Activated T-helper 1 cell treated with anti-CD3 and anti-CD28 coated beads, Interleukin-12 subunit alpha, Interleukin-12 subunit beta, Interleukin-2, Interleukin-4 antibody, amounts not matched to agents 30 ng/mL and 10 ng/mL and 1 ng/mL, durations not matched to agents 14 hours and 24 hours and 36 hours (primary cell): ENCODE measurements at regions of chr12 and their contacts with region 1.

Region 1: GRCh38 chr12:76031537-76032073 is at the start of gene PHLDA1:
- DNase-seq: peak; percentile 95
- H3K4me3 Mint-ChIP-seq: peak within 1 kb of the TSS; percentile 99
- H3K27ac Mint-ChIP-seq: peak within 1 kb of the TSS; percentile 99
- H3K4me1 Mint-ChIP-seq: peaks cover 34% of the 10 kb centered on the region
- H3K27me3 Mint-ChIP-seq: peaks cover 3% of the 10 kb centered on the region
- total RNA-seq, gene PHLDA1: 88.9 and 91.5 TPM in 2 replicates

Region 2: GRCh38 chr12:74537707-74538385 is 1493.8 kb before region 1 on chr12 and contains the start of gene ATXN7L3B:
- intact Hi-C with region 1: loop called (anchors 5 kb)
- DNase-seq: peak; percentile 93
- H3K4me3 Mint-ChIP-seq: peak within 1 kb of the TSS; percentile 92
- H3K27ac Mint-ChIP-seq: peak within 1 kb of the TSS; percentile 97
- H3K4me1 Mint-ChIP-seq: peaks cover 55% of the 10 kb centered on the region
- H3K27me3 Mint-ChIP-seq: peaks cover 2% of the 10 kb centered on the region
- total RNA-seq, gene ATXN7L3B: 24.8 and 25.4 TPM in 2 replicates

Region 3: DNA sequence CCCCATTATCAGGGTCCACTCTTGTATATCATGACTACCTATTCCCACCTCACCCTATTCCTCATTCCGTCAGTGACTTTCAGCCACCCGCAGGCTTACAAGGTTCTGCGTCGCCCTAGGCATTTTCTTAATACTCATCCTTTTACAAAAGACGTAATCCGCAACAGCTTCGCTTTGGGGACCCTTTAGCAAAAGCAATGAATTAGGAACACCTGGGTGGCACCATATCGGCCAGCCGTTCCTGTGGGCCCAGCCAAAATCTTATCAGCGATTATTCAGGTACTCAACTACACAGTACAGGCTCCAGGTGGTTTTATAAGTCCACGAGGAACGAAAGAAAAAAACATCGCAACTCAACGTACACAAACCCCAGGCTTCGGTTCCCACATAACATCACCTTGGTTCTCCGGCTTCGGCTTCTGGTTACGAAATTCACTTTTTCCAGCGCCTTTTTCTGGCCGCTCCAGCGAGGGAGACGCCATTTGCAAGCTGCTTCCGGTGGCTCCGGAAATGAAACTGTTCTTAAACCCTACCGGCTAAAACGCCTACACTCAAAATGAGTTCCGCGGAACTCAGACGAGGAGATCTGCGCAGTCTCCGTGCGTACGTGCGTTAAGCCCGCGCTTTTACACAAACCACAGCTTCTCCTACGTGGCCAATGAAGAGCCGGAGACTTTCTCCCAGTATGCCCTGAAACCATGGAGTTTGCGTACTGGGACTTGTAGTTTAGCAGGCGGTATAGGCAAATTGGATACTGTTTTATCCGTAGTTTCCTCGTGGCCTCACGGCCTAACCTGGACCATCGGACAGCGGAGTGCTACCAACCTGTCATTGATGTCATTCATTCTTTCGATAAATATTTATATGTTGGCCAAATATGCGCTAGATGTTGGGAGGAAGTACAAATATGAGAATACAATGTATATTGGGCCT is 520.2 kb before region 1 on chr12 and contains the start of gene KRR1:
- intact Hi-C with region 1: loop called (anchors 1 kb)
- DNase-seq: peak; percentile 89
- H3K4me3 Mint-ChIP-seq: peak within 1 kb of the TSS; percentile 97
- H3K27ac Mint-ChIP-seq: peak within 1 kb of the TSS; percentile 98
- H3K4me1 Mint-ChIP-seq: peaks cover 45% of the 10 kb centered on the region
- H3K27me3 Mint-ChIP-seq: peaks cover 3% of the 10 kb centered on the region
- total RNA-seq, gene KRR1: 130 and 137 TPM in 2 replicates

Region 4: DNA sequence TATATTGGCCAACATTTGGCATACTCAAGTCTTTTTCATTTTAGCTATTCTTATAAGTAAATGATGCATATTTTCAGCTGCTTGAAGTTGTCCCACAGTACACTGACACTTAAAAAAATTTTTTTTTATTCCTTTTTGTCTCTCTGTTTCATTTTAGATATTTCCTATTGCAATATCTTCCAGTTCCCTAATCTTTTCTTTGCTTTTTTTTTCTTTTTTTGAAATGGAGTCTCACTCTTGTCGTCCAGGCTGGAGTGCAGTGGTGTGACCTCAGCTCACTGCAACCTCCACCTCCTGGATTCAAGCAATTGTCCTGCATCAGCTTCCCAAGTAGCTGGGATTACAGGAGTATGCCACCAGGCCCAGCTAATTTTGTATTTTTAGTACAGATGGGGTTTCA is 302.8 kb before region 1 on chr12:
- intact Hi-C with region 1: no loop called
- DNase-seq: no peak
- H3K4me3 Mint-ChIP-seq: no peak overlapping the region
- H3K27ac Mint-ChIP-seq: no peak overlapping the region
- H3K4me1 Mint-ChIP-seq: no peaks in the 10 kb centered on the region
- H3K27me3 Mint-ChIP-seq: peaks cover 4% of the 10 kb centered on the region

Region 5: DNA sequence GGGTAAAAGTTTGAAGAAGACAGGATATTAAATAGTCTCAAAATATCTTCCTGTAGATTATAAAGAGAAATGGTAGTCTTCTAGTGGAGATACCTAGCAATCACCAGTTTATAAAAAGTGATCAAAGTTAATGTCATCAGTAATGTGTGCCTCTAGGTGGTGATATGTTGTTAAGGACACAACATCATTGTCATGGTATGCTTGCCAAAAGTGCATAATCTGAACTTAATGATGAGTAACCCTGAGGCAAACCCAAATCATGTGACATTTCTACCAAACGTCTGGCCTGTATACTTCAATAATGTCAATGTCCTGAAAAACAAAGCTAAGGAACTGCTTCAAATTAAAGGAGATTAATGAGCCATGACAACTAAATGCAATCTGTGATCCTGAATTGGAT is 214.7 kb before region 1 on chr12:
- intact Hi-C with region 1: loop called (anchors 1 kb)
- DNase-seq: no peak
- H3K4me3 Mint-ChIP-seq: no peak overlapping the region
- H3K27ac Mint-ChIP-seq: no peak overlapping the region
- H3K4me1 Mint-ChIP-seq: peaks cover 29% of the 10 kb centered on the region
- H3K27me3 Mint-ChIP-seq: peaks cover 4% of the 10 kb centered on the region

Region 6: GRCh38 chr12:75944097-75944904 is 87.3 kb before region 1 on chr12:
- intact Hi-C with region 1: loop called (anchors 1 kb)
- DNase-seq: peak; percentile 27
- H3K4me3 Mint-ChIP-seq: peak overlapping the region; percentile 65
- H3K27ac Mint-ChIP-seq: peak overlapping the region; percentile 98
- H3K4me1 Mint-ChIP-seq: peaks cover 30% of the 10 kb centered on the region
- H3K27me3 Mint-ChIP-seq: no peaks in the 10 kb centered on the region

Region 7: GRCh38 chr12:76020731-76021672 is 10.6 kb before region 1 on chr12:
- intact Hi-C with region 1: loop called (anchors 1 kb)
- DNase-seq: peak; percentile 68
- H3K4me3 Mint-ChIP-seq: peak overlapping the region; percentile 74
- H3K27ac Mint-ChIP-seq: peak overlapping the region; percentile 99
- H3K4me1 Mint-ChIP-seq: peaks cover 73% of the 10 kb centered on the region
- H3K27me3 Mint-ChIP-seq: no peaks in the 10 kb centered on the region